WTC11 (cell line): ENCODE measurements at regions of chr5 and their contacts with region 1.

Region 1: DNA sequence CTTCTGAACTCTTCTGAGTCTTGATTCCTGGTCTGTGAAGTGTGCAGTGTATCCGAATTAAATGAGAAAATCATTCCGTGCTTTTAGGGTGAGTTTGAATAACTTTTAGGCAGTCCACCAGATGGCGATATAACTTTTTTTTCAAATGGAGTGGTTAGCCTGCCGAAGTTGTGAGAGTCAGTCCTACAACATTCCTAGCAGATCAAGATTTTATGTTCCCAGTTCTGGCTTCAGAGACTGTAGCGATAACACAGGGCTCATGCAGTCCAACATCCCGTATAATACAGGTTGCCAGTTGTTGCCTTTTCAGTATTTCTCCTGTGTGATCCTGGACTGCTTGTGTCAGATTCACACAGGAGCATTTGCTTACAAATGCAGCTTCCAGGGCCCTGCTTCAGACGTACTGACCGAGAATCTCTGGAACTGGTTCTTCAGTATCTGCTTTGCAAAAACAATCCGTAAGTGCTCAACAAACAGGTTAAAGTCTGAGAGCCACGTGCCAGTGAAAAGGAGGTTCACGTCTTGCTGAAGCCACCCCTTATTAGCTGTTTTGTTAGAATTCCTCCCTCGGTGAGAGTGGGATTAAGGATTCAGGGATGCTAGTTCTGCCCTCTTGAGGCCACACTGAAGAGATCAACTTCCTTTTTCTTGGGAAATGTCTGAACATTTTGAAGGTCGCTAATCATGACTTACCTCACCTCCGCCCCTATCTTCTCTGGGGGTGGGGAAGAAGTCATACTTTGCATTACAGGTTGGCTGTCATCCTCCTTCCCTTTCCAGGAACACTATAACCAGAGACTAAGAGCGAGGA is 22.8 kb downstream of the SMIM3 start:
- DNase-seq: no peak
- ATAC-seq: peak; percentile 81
- H3K4me3 Mint-ChIP-seq: peak overlapping the region; percentile 67
- H3K27ac Mint-ChIP-seq: 0 out of 2 replicates have a peak overlapping the region, but pooled peaks have one; percentile 29
- H3K4me1 Mint-ChIP-seq: no peaks in the 10 kb centered on the region
- H3K27me3 Mint-ChIP-seq: peaks cover 12% of the 10 kb centered on the region
- CTCF ChIP-seq: no peak

Region 2: DNA sequence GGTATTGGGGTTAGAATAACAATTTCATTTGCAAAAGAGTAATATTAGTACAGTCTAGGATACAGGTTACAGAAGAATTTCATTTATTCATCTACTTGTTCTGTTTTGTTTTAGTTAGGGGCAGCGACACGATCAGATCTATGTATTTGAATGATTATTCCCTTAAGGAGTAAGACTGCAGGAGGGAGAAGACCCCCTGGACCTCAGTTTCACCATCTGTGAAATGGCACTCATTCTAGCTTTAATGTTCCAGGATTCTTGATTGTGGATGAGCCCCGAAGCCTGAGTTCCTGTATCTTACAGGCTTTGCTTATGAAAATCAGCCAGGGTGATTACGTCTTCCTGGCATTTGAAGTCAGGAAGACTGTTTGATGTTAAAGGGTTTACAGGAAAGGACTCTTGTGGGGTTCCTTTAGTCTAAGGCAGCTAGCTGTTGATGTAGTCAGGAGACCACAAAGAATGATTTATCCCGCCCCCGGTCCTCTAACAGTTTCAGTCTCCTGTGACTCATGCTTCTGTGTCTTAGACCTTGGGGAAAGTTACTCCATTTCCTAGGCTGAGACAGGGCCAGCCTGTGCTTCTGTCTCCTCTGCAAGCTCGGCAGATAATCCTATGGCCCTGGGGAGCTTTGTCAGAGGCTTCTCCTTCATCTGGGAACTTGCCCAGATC is 11.2 kb before region 1 on chr5:
- CTCF ChIA-PET with region 1: interaction called, 18 read pairs
- POLR2A ChIA-PET with region 1: no interaction called
- DNase-seq: no peak
- ATAC-seq: peak; percentile 63
- H3K4me3 Mint-ChIP-seq: no peak overlapping the region
- H3K27ac Mint-ChIP-seq: peak overlapping the region; percentile 85; the same call in 1 of the 2 replicates
- H3K4me1 Mint-ChIP-seq: peaks cover 28% of the 10 kb centered on the region
- H3K27me3 Mint-ChIP-seq: no peaks in the 10 kb centered on the region
- CTCF ChIP-seq: no peak

Region 3: DNA sequence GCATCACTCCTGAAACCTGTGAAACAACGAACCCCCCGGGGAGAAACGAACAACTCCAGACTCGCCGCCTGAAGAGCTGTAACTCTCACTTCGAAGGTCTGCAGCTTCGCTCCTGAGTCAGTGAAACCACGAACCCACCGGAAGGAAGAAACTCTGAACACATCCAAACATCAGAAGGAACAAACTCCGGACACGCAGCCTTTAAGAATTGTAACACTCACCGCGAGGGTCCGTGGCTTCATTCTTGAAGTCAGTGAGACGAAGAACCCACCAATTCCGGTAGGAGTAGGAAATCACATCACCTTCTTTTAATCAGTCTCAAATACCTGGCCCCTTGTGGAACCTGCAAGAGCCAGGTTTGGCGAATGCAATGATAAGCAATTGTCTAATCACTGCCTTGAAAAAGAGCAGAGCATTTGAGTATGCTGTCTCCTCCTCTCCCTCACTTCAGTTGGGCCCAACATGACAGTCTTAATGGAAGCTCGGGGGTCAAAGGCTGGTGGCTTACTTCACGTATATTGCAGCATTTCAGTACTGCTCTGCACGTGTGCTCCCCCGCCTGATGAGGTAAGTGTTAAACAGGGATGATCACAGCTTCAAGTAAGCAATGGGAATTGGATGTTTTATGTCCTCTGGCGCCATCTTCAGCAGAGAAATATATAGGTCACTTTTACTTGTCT is 45.5 kb after region 1 on chr5:
- CTCF ChIA-PET with region 1: interaction called, 29 read pairs
- POLR2A ChIA-PET with region 1: no interaction called
- DNase-seq: peak; percentile 34
- ATAC-seq: peak; percentile 98
- H3K4me3 Mint-ChIP-seq: no peak overlapping the region
- H3K27ac Mint-ChIP-seq: no peak overlapping the region
- H3K4me1 Mint-ChIP-seq: peaks cover 8% of the 10 kb centered on the region; the same call in 1 of the 2 replicates
- H3K27me3 Mint-ChIP-seq: peaks cover 18% of the 10 kb centered on the region
- CTCF ChIP-seq: peak; percentile 57

Region 4: GRCh38 chr5:150989695-150990094 is 188.4 kb after region 1 on chr5:
- CTCF ChIA-PET with region 1: interaction called, 12 read pairs
- POLR2A ChIA-PET with region 1: no interaction called
- DNase-seq: peak; percentile 63
- ATAC-seq: peak; percentile 96
- H3K4me3 Mint-ChIP-seq: no peak overlapping the region
- H3K27ac Mint-ChIP-seq: no peak overlapping the region
- H3K4me1 Mint-ChIP-seq: no peaks in the 10 kb centered on the region
- H3K27me3 Mint-ChIP-seq: peaks cover 9% of the 10 kb centered on the region
- CTCF ChIP-seq: peak; percentile 17; the same call in 1 of the 2 replicates